Activated naive CD4-positive, alpha-beta T cell treated with anti-CD3 and anti-CD28 coated beads for 36 hours (primary cell): ENCODE measurements at regions of chr15 and their contacts with region 1.

Region 1: DNA sequence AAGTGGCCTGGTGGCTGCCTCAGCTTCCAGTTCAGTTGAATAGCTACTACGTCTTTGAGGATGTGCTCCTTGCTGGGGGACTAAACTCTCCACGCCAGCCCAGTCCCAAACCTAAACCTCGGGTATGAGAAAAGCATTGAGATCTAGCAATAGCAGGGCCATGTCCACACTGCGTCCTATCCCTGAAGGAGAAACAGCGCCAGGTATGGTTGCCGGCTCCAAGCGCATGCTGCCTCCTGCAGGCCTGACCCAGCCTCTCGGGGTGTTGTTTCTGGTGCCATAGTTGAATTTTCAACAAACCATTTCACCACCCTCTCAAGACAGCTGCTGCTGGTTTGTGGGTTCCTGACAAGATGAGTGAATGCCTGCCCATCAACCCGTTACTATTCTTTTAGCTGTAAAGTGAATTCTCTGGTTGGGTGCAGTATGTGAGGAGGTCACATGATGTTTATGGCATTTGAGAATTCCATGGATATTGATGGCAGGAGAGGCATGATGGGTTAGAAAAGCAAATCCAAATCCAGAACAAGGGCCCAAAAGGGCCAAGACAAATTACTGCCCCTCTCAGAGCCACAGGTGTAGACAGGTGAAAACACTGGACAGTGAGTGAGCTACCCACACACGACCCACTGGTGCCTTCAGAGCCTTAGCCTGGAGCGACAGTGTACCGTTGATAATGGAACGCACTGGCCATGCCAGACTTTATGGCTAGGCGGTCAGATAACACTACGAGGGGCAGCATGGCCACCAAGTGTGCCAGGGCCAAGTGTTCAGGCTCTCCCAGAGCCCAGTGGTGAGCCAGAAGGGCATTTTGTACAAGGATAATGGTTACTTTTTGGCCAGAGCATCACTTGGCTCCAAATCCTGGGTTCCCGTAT is 12.8 kb upstream of the SLC28A1 start:
- DNase-seq: peak; percentile 30
- H3K4me3 Mint-ChIP-seq: no peak overlapping the region
- H3K27ac Mint-ChIP-seq: no peak overlapping the region
- H3K4me1 Mint-ChIP-seq: no peaks in the 10 kb centered on the region
- H3K27me3 Mint-ChIP-seq: no peaks in the 10 kb centered on the region

Region 2: DNA sequence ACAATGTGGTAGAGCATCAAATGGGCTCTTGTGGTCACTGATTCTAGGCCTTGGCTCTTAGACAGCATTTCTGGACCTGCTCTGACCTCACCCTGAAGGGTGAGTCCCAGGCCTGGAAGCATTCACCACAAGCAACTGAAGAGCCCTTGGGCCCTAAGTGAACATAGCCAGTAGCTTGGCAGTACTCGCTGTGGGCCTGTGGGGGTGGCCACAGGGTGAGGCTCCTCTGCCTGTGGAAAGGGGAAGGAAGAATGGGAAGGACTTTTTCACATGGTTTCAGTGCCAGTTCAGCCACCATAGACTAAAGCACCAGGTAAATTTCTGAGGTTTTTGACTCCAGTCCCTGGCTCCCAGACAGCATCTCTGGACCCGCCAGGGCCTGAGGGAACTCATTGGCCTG is 276.0 kb before region 1 on chr15:
- CTCF ChIA-PET with region 1: interaction called, 11 read pairs
- intact Hi-C with region 1: loop called (anchors 2 kb)
- DNase-seq: no peak
- H3K4me3 Mint-ChIP-seq: no peak overlapping the region
- H3K27ac Mint-ChIP-seq: no peak overlapping the region
- H3K4me1 Mint-ChIP-seq: peaks cover 30% of the 10 kb centered on the region
- H3K27me3 Mint-ChIP-seq: no peaks in the 10 kb centered on the region

Region 3: DNA sequence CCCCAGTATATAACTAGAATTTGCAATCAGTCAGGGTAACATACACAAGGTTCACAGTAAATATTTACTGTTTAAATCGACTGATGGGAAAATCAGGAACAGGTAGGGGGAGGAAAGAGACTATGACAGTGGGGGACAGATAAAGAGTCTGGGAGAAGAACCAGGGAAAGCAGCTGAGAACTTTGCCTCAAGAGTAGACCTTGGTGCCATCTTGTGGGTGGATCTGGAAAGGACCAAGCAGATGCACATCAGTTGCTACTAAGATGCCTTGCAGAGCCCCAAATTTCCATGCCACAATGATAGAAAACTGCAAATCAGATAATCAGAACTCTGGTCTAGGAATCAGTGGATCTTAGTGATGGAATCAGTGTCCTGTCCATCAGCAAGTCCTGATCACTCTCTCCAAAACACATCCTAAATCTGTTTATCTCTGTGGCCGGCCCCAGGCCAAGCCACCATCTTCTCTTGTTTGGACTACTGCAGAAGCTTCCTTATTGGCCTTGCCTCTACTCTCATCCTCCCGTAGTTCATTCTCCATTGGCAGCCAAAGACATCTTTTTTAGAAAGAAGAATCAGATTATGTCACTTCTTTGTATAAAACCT is 172.7 kb after region 1 on chr15:
- CTCF ChIA-PET with region 1: no interaction called
- intact Hi-C with region 1: no loop called
- DNase-seq: peak; percentile 74
- H3K4me3 Mint-ChIP-seq: no peak overlapping the region
- H3K27ac Mint-ChIP-seq: no peak overlapping the region
- H3K4me1 Mint-ChIP-seq: peaks cover 16% of the 10 kb centered on the region
- H3K27me3 Mint-ChIP-seq: no peaks in the 10 kb centered on the region

Region 4: GRCh38 chr15:85164809-85165463 is 293.3 kb after region 1 on chr15:
- CTCF ChIA-PET with region 1: no interaction called
- intact Hi-C with region 1: no loop called
- DNase-seq: no peak
- H3K4me3 Mint-ChIP-seq: no peak overlapping the region
- H3K27ac Mint-ChIP-seq: no peak overlapping the region
- H3K4me1 Mint-ChIP-seq: peaks cover 6% of the 10 kb centered on the region
- H3K27me3 Mint-ChIP-seq: peaks cover 3% of the 10 kb centered on the region